ENCODE measurements at regions of chr2 and their contacts with region 1.

Region 1: DNA sequence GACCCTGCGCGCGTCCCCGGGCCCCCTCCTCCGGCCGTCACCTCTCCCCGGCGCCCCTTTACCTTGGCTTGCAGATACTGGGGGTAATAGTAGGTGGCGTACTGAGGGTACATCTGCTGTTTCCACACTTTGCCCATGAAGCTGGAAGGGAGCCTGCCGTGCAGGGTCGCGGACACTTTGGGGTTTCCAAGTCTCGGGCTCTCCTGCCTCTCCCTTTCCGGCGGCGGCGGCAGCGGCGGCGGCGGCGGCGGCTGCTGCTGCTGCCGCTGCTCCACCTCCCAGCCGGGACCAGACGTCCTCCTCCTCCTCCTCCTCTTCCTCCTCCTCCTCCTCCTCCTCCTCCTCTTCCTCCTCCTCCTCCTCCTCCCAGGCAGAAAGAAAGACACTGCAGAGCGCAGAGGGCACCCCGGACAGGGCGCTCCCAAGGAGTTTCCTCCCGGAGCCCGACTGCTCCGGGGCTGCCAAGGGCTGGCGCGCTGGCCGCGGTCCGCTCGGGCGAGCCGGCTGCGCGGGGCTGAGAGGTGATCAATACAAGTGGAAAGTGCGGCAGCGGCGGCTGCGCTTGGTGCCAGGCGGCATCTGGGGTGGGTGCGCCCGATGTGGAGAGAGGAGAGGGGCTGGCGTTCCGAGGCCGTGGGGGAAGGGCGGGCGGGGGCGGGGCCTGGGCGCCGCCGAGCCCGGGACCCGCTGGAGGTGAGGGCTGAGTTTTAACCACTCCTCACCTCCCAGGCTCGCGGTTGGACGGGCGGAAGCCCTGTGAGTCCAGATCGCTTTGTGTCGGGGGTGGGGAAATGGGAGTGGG is at the start of gene RBMS1:
- DNase-seq: peak; percentile 35
- H3K4me3 Mint-ChIP-seq: peak within 1 kb of the TSS; percentile 93
- H3K27ac Mint-ChIP-seq: peak within 1 kb of the TSS; percentile 91
- H3K4me1 Mint-ChIP-seq: peaks cover 43% of the 10 kb centered on the region
- H3K27me3 Mint-ChIP-seq: peaks cover 28% of the 10 kb centered on the region
- total RNA-seq, gene RBMS1: 40.1 and 42.2 TPM in 2 replicates

Region 2: DNA sequence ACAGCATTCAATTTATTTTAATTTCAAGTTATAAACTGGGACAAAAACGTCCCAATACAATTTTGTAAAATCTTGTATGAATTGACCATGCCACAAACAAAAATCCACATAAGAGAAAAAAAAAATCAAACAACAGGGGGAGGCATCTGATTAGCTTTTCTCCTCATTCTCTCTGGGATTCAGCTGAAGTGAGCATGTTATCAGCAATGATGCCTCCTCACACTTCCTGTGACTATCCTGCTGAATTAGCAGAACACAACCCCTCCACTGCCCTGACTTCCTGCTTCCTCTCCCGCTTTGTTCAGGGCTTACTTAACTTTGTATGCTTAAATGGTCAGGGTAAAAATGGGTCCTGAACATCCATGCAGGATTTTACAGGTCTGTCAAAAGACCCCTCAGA is 161.1 kb before region 1 on chr2:
- intact Hi-C with region 1: loop called (anchors 5 kb)
- DNase-seq: no peak
- H3K4me3 Mint-ChIP-seq: no peak overlapping the region
- H3K27ac Mint-ChIP-seq: peak overlapping the region; percentile 41
- H3K4me1 Mint-ChIP-seq: peaks cover 69% of the 10 kb centered on the region
- H3K27me3 Mint-ChIP-seq: no peaks in the 10 kb centered on the region

Region 3: GRCh38 chr2:160472839-160473251 is 20.6 kb before region 1 on chr2:
- intact Hi-C with region 1: loop called (anchors 2 kb)
- DNase-seq: no peak
- H3K4me3 Mint-ChIP-seq: no peak overlapping the region
- H3K27ac Mint-ChIP-seq: no peak overlapping the region
- H3K4me1 Mint-ChIP-seq: peaks cover 50% of the 10 kb centered on the region
- H3K27me3 Mint-ChIP-seq: no peaks in the 10 kb centered on the region

Region 4: GRCh38 chr2:160482673-160483072 is 10.8 kb before region 1 on chr2:
- intact Hi-C with region 1: loop called (anchors 1 kb)
- DNase-seq: peak; percentile 41
- H3K4me3 Mint-ChIP-seq: no peak overlapping the region
- H3K27ac Mint-ChIP-seq: peak overlapping the region; percentile 63
- H3K4me1 Mint-ChIP-seq: peaks cover 55% of the 10 kb centered on the region
- H3K27me3 Mint-ChIP-seq: no peaks in the 10 kb centered on the region

Region 5: DNA sequence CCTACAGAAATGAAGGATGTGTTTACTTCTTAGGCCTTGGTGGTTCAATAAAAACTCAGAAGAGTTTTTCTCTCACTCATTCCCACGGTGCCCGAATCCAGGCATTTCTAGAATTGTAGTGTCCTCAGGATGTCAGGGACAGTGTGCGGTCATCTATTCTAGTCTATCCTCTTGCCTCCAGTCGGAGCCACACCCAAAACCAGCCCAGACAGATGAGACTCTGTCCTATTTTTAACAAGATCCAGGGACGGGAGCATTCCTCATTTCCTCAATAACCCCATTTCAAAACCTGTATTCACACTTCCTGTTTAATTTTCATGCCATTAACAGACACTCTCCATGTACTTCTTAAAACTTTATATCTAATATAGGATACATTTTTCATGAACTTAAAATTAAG is 11.8 kb after region 1 on chr2:
- intact Hi-C with region 1: loop called (anchors 1 kb)
- DNase-seq: no peak
- H3K4me3 Mint-ChIP-seq: no peak overlapping the region
- H3K27ac Mint-ChIP-seq: no peak overlapping the region
- H3K4me1 Mint-ChIP-seq: peaks cover 21% of the 10 kb centered on the region
- H3K27me3 Mint-ChIP-seq: peaks cover 18% of the 10 kb centered on the region

Region 6: DNA sequence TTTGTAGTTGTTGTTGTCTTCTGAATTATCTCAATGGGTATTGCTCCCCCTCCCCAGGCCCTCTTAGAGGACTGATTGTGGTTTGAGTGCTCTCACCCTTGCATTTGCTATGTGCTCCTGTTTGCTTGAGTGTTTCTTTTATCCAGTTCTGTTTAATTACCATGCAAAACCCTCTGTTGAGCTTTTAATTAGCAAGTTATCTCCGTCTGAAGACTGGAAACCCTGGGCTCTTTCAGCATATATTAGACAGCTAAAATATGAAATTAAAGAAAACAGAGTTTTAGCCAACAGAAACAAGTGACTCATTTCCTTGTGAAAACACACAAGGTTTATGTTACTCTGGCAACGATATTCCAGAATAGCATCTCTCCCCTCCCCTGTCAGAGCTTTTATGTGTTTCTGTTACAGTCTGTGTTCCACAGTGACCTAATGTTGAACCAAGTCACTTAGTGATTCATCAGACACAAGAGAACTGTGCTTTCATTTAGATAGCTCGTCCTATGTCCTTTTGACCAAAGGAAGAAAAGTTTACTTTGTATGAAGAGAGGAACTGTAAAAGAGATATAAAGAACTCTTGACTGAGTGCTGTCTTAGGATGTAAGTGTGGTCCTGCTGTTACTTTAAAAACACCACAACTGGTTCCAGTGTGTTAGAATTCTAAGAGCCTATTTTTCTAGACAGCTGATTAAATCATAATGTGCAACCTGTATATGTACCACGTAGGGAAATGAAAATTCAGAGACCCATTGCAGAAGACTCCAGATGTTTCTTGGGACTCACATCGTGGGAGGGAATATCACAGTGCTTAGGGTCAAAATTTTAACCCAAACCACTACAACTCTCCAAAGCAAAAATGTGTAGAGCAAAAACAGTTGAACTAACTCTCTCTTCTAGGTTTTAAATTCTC is 173.0 kb after region 1 on chr2:
- intact Hi-C with region 1: loop called (anchors 5 kb)
- DNase-seq: no peak
- H3K4me3 Mint-ChIP-seq: no peak overlapping the region
- H3K27ac Mint-ChIP-seq: no peak overlapping the region
- H3K4me1 Mint-ChIP-seq: peaks cover 20% of the 10 kb centered on the region
- H3K27me3 Mint-ChIP-seq: peaks cover 6% of the 10 kb centered on the region